HEK293 (cell line): ENCODE measurements at regions of chr4 and their contacts with region 1.

Region 1: DNA sequence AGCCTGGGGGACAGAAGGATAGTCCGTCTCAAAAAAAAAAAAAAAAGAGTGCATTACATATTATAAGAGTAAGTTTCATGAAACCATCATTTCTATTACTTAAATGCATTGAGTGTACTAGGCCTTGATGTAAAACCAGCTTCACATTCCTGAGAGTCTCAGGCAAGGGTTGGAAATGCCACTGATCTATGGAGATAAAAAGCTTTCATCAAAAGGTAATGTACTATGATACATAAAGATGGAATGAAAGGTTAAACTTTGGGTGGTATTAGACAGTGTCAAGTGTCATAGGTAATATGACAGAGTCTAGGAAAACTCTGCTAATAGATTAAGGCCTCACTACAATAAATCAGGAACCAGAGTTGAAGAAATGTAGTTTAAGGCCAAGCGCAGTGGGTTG is 7.4 kb downstream of the CFAP97 start:
- H3K4me3 ChIP-seq: no peak overlapping the region
- H3K27ac ChIP-seq: no peak overlapping the region
- H3K4me1 ChIP-seq: peaks cover 9% of the 10 kb centered on the region
- CTCF ChIP-seq: no peak

Region 2: DNA sequence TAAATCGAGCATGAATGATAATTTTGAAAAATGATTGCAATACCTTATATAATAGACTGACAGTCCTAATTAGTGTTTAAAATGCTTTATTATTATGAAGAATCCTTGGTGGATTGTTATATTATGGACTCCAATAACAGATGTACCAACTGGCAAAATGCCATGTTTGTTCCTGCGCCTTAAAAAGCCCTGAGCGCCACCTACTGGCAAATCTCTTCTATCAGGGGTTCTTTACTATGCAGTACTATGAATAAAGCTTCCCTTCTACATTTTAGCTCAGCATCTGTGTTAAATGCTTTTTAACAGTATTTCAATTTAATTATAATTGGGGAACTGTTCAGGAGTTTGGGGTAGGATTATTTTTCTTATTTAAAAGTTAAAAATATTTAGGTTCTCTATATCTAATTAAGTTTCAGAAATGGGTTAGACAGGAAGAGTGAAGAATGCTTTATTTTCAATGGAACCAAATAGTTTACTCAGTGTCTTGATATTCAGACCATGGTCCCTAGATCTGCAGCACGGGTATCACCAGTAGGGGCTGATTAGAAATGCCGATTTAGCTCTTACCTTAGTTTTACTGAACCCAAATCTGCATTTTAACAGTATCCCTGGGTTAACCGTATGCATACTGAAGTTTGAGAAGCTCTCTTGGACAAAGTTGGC is 12.7 kb before region 1 on chr4:
- CTCF ChIA-PET with region 1: interaction called, 13 read pairs
- POLR2A ChIA-PET with region 1: interaction called, 9 read pairs
- H3K4me3 ChIP-seq: no peak overlapping the region
- H3K27ac ChIP-seq: no peak overlapping the region
- H3K4me1 ChIP-seq: no peaks in the 10 kb centered on the region
- CTCF ChIP-seq: no peak